B cell (primary cell): ENCODE measurements at regions of chr3 and their contacts with region 1.

Region 1: DNA sequence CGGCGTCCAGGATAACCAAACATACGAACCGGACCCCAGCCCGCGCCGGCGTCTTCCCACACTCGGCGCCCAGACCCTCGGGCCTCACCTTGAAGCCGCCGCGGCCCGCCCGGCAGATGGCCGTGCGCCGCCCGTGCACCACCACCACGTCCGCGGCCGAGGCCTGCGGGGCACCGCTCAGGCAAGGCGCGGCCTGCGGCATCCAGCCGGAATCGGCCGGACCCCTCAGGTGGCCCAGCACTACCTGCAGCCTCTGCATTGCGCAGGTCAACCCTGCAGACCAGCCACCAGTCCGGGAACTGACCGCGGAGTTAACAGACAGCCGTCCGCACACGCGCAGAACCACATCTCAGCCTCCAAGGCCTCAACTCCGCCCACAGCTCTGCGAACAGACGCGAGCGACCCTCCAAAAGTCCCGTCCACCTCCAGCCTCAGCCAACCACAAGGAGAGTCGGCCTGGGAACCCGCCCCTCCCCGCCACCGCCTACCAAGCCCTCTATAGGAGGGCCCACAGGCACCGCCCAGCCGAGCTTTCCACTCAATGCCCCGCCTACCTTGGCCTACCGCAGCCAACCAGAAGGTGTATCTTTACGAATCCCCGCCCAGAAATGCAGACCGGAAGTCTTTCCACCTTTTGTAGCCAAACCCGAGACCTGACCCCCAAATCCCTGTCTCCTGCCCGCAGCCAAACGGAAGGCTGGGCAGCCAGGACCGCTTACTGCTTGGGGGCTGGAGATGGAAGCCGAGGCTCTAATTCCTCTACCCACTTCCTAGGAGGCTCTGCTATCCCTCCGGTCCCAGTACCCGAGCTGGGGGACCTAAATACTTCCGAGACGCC is at the start of gene ACAA1:
- DNase-seq: peak; percentile 99
- ATAC-seq: peak; percentile 91
- H3K4me3 ChIP-seq: peak within 1 kb of the TSS; percentile 84 to 98 (median 92)
- H3K4me3 Mint-ChIP-seq: peak within 1 kb of the TSS; percentile 92
- H3K27ac ChIP-seq: peak within 1 kb of the TSS; percentile 85 to 87
- H3K27ac Mint-ChIP-seq: peak within 1 kb of the TSS; percentile 94
- H3K4me1 ChIP-seq: peaks cover 39 to 52% of the 10 kb centered on the region in 2 donors
- H3K4me1 Mint-ChIP-seq: peaks cover 65% of the 10 kb centered on the region
- H3K27me3 ChIP-seq: no peaks in the 10 kb centered on the region
- H3K27me3 Mint-ChIP-seq: no peaks in the 10 kb centered on the region
- CTCF ChIP-seq: no peak
- total RNA-seq, gene ACAA1: 87.4 and 98.4 TPM in 2 replicates

Region 2: DNA sequence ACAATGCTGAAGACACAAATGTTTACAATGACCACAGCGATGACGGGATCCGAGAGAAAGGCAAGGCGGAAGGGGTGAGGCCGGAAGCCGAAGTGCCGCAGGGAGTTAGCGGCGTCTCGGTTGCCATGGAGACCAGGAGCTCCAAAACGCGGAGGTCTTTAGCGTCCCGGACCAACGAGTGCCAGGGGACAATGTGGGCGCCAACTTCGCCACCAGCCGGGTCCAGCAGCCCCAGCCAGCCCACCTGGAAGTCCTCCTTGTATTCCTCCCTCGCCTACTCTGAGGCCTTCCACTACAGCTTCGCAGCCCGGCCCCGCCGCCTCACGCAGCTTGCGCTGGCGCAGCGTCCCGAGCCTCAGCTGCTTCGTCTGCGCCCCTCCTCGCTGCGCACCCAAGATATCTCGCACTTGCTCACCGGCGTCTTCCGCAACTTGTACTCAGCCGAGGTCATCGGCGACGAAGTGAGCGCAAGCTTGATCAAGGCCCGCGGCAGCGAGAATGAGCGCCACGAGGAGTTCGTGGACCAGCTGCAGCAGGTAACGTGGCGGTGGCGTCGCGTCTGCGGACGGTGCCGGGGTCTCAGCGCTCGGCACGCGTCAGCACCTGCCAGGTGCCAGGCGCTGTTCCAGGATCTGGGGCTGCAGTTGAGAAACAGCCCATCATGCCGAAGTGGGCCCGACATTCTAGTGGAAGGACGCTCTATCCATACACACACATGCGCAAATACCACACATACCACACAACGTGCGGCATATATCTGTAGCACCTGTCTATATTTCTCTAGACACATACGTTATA is 97.7 kb before region 1 on chr3 and contains the start of gene DLEC1:
- CTCF ChIA-PET with region 1: no interaction called
- POLR2A ChIA-PET with region 1: interaction called, 4 read pairs
- intact Hi-C with region 1: loop called (anchors 1 kb)
- DNase-seq: peak; percentile 86
- ATAC-seq: peak; percentile 65
- H3K4me3 ChIP-seq: peak within 1 kb of the TSS; percentile 64 to 71 (median 69)
- H3K4me3 Mint-ChIP-seq: peak within 1 kb of the TSS; percentile 93
- H3K27ac ChIP-seq: peak within 1 kb of the TSS; percentile 18 to 46
- H3K27ac Mint-ChIP-seq: peak within 1 kb of the TSS; percentile 54
- H3K4me1 ChIP-seq: peaks cover 12 to 22% of the 10 kb centered on the region in 2 donors
- H3K4me1 Mint-ChIP-seq: peaks cover 19% of the 10 kb centered on the region
- H3K27me3 ChIP-seq: peaks cover 0 to 4% (median 1%) of the 10 kb centered on the region in 4 experiments
- H3K27me3 Mint-ChIP-seq: peaks cover 9% of the 10 kb centered on the region
- CTCF ChIP-seq: no peak
- total RNA-seq, gene DLEC1: 0.83 and 2.1 TPM in 2 replicates

Region 3: GRCh38 chr3:38151667-38152275 is 14.8 kb after region 1 on chr3:
- CTCF ChIA-PET with region 1: interaction called, 5 read pairs
- POLR2A ChIA-PET with region 1: interaction called, 3 read pairs
- intact Hi-C with region 1: loop called (anchors 2 kb)
- DNase-seq: peak; percentile 25
- ATAC-seq: peak; percentile 44
- H3K4me3 ChIP-seq: no peak overlapping the region
- H3K4me3 Mint-ChIP-seq: no peak overlapping the region
- H3K27ac ChIP-seq: no peak overlapping the region
- H3K27ac Mint-ChIP-seq: peak overlapping the region; percentile 56
- H3K4me1 ChIP-seq: peaks cover 23 to 40% of the 10 kb centered on the region in 2 donors
- H3K4me1 Mint-ChIP-seq: peaks cover 50% of the 10 kb centered on the region
- H3K27me3 ChIP-seq: no peaks in the 10 kb centered on the region
- H3K27me3 Mint-ChIP-seq: no peaks in the 10 kb centered on the region
- CTCF ChIP-seq: no peak

Region 4: GRCh38 chr3:38164966-38165680 is 28.1 kb after region 1 on chr3 and contains the start of gene OXSR1:
- CTCF ChIA-PET with region 1: interaction called, 41 read pairs
- POLR2A ChIA-PET with region 1: interaction called, 75 read pairs
- intact Hi-C with region 1: loop called (anchors 1 kb)
- DNase-seq: peak; percentile 99
- ATAC-seq: peak; percentile 89
- H3K4me3 ChIP-seq: peak within 1 kb of the TSS; percentile 64 to 97 (median 85)
- H3K4me3 Mint-ChIP-seq: peak within 1 kb of the TSS; percentile 94
- H3K27ac ChIP-seq: peak within 1 kb of the TSS; percentile 98 to 100
- H3K27ac Mint-ChIP-seq: peak within 1 kb of the TSS; percentile 100
- H3K4me1 ChIP-seq: peaks cover 21 to 28% of the 10 kb centered on the region in 2 donors
- H3K4me1 Mint-ChIP-seq: peaks cover 50% of the 10 kb centered on the region
- H3K27me3 ChIP-seq: no peaks in the 10 kb centered on the region
- H3K27me3 Mint-ChIP-seq: no peaks in the 10 kb centered on the region
- CTCF ChIP-seq: no peak
- total RNA-seq, gene OXSR1: 37.9 and 41.5 TPM in 2 replicates

Region 5: GRCh38 chr3:39383045-39383880 is 1246.3 kb after region 1 on chr3 and contains the start of gene SLC25A38:
- CTCF ChIA-PET with region 1: no interaction called
- POLR2A ChIA-PET with region 1: no interaction called
- intact Hi-C with region 1: loop called (anchors 5 kb)
- DNase-seq: peak; percentile 93
- ATAC-seq: peak; percentile 71
- H3K4me3 ChIP-seq: peak within 1 kb of the TSS; percentile 4 to 91 (median 83)
- H3K4me3 Mint-ChIP-seq: peak within 1 kb of the TSS; percentile 98
- H3K27ac ChIP-seq: peak within 1 kb of the TSS; percentile 94 to 96
- H3K27ac Mint-ChIP-seq: peak within 1 kb of the TSS; percentile 99
- H3K4me1 ChIP-seq: peaks cover 43 to 50% of the 10 kb centered on the region in 2 donors
- H3K4me1 Mint-ChIP-seq: peaks cover 42% of the 10 kb centered on the region
- H3K27me3 ChIP-seq: no peaks in the 10 kb centered on the region
- H3K27me3 Mint-ChIP-seq: no peaks in the 10 kb centered on the region
- CTCF ChIP-seq: peak; percentile 60
- total RNA-seq, gene SLC25A38: 46.3 and 53.0 TPM in 2 replicates